ENCODE measurements at regions of chr10 and their contacts with region 1.

Region 1: DNA sequence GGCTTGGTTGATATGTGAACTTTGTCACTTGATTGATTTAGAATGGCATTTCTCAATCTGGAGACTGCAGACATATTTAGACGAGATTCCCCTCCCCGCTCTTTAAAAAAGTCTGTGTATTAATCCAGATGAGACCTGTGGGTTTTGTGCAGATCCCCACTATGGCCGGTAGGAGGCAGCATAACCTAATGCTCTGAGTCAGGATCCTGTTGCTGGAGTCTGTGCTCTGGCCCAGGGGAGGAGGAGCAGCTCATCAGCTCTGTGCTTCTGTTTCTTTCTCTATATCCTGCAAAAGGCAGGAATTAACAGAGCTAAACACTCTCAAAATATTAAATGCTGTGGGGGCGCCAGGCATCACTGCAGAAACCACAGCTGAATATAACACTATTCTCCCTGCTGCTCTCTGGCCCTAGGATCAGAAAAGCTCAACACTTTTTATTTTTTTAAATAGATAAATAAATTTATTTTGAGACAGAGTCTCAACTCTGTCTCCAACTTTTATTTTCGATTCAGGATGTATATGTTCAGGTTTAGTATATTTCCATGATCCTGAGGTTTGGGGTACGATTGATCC is 23.9 kb upstream of the SEPHS1 start:
- DNase-seq: peak; percentile 87 to 90 (median 90)
- ATAC-seq: peak; percentile 100
- H3K4me3 ChIP-seq: no peak overlapping the region
- H3K27ac ChIP-seq: no peak overlapping the region
- H3K4me1 ChIP-seq: peaks cover 0 to 4% of the 10 kb centered on the region in 2 experiments; a peak in 2 of 5 replicates
- H3K27me3 ChIP-seq: no peaks in the 10 kb centered on the region
- CTCF ChIP-seq: peak; percentile 91 to 99 (median 97)
- EP300 ChIP-seq: no peak; the same call in 1 of the 2 replicates
- POLR2A ChIP-seq: no peak
- RAD21 ChIP-seq: peak; percentile 97 to 98

Region 2: GRCh38 chr10:13299437-13300287 is 72.3 kb before region 1 on chr10 and contains the start of gene PHYH:
- CTCF ChIA-PET with region 1: no interaction called
- POLR2A ChIA-PET with region 1: no interaction called
- in situ Hi-C with region 1: no loop called
- intact Hi-C with region 1: no loop called
- DNase-seq: peak; percentile 83 to 90 (median 88)
- ATAC-seq: peak; percentile 89
- H3K4me3 ChIP-seq: peak within 1 kb of the TSS; percentile 58
- H3K27ac ChIP-seq: peak within 1 kb of the TSS; percentile 69
- H3K4me1 ChIP-seq: peaks cover 8 to 32% of the 10 kb centered on the region in 2 experiments; a peak in 3 of 5 replicates
- H3K27me3 ChIP-seq: no peaks in the 10 kb centered on the region
- CTCF ChIP-seq: no peak
- EP300 ChIP-seq: no peak; the same call in 1 of the 2 replicates
- POLR2A ChIP-seq: peak; percentile 69
- RAD21 ChIP-seq: no peak
- polyA plus RNA-seq, gene PHYH: 6.3 to 6.9 TPM

Region 3: GRCh38 chr10:13448216-13448615 is 76.2 kb after region 1 on chr10:
- CTCF ChIA-PET with region 1: no interaction called
- POLR2A ChIA-PET with region 1: interaction called, 7 read pairs
- in situ Hi-C with region 1: loop called (anchors 5 kb)
- intact Hi-C with region 1: no loop called
- DNase-seq: no peak
- ATAC-seq: no peak
- H3K4me3 ChIP-seq: no peak overlapping the region
- H3K27ac ChIP-seq: no peak overlapping the region
- H3K4me1 ChIP-seq: no peaks in the 10 kb centered on the region; a peak in 1 of 5 replicates
- H3K27me3 ChIP-seq: no peaks in the 10 kb centered on the region
- CTCF ChIP-seq: no peak
- EP300 ChIP-seq: no peak
- POLR2A ChIP-seq: no peak
- RAD21 ChIP-seq: no peak

Region 4: DNA sequence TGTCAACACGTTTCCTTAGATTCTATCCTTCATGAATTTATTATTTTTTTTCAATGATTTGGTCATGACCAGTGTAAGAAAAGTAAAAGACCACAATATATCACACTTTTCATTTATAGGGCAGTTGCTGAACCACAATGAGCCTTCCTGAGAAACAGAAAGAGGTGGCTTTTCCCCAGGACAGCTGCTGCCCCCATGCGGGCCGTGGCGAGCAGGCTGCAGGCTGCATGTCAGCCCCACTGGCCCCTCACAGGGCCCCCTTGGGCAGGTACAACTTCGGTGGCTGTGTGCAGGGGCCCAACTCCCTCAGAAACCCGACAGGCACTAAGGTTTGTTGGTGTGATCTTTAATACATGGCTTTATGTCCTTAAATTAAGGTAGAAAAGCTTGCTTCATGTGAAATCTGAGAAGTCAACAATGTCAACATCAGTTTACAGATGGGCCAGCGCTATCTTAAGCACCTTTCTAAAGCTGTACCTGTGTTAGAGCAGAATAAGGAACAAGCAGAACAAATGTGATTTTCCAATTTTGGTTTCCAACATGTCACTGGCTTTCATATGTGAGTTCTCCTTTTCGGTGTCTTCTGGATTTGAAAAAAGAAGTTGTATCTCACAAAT is 146.2 kb after region 1 on chr10:
- CTCF ChIA-PET with region 1: interaction called, 10 read pairs
- POLR2A ChIA-PET with region 1: no interaction called
- in situ Hi-C with region 1: loop called (anchors 10 kb)
- intact Hi-C with region 1: loop called (anchors 1 kb)
- DNase-seq: peak; percentile 31 to 68 (median 42)
- ATAC-seq: peak; percentile 88
- H3K4me3 ChIP-seq: no peak overlapping the region
- H3K27ac ChIP-seq: no peak overlapping the region
- H3K4me1 ChIP-seq: peaks cover 0 to 3% of the 10 kb centered on the region in 2 experiments; a peak in 1 of 5 replicates
- H3K27me3 ChIP-seq: peaks cover 0 to 25% of the 10 kb centered on the region in 2 experiments; a peak in 3 of 5 replicates
- CTCF ChIP-seq: peak; percentile 67 to 77 (median 70)
- EP300 ChIP-seq: no peak
- POLR2A ChIP-seq: no peak
- RAD21 ChIP-seq: peak; percentile 55 to 76

Region 5: GRCh38 chr10:13589316-13589715 is 217.3 kb after region 1 on chr10:
- CTCF ChIA-PET with region 1: interaction called, 4 read pairs
- POLR2A ChIA-PET with region 1: no interaction called
- in situ Hi-C with region 1: no loop called
- intact Hi-C with region 1: loop called (anchors 1 kb)
- DNase-seq: no peak
- ATAC-seq: no peak
- H3K4me3 ChIP-seq: no peak overlapping the region
- H3K27ac ChIP-seq: no peak overlapping the region
- H3K4me1 ChIP-seq: peaks cover 0 to 11% of the 10 kb centered on the region in 2 experiments; a peak in 2 of 5 replicates
- H3K27me3 ChIP-seq: no peaks in the 10 kb centered on the region
- CTCF ChIP-seq: peak in 1 of 3 experiments; percentile 27; a peak in 1 of 6 replicates
- EP300 ChIP-seq: no peak
- POLR2A ChIP-seq: no peak
- RAD21 ChIP-seq: no peak

Region 6: GRCh38 chr10:13787015-13787421 is 415.0 kb after region 1 on chr10:
- CTCF ChIA-PET with region 1: no interaction called
- POLR2A ChIA-PET with region 1: no interaction called
- in situ Hi-C with region 1: no loop called
- intact Hi-C with region 1: no loop called
- DNase-seq: no peak
- ATAC-seq: peak; percentile 36
- H3K4me3 ChIP-seq: no peak overlapping the region
- H3K27ac ChIP-seq: no peak overlapping the region
- H3K4me1 ChIP-seq: no peaks in the 10 kb centered on the region
- H3K27me3 ChIP-seq: peaks cover 16 to 30% of the 10 kb centered on the region in 2 experiments; a peak in 4 of 5 replicates
- CTCF ChIP-seq: no peak
- EP300 ChIP-seq: no peak
- POLR2A ChIP-seq: no peak
- RAD21 ChIP-seq: no peak